Naive thymus-derived CD4-positive, alpha-beta T cell (primary cell): ENCODE measurements at regions of chr2 and their contacts with region 1.

Region 1: DNA sequence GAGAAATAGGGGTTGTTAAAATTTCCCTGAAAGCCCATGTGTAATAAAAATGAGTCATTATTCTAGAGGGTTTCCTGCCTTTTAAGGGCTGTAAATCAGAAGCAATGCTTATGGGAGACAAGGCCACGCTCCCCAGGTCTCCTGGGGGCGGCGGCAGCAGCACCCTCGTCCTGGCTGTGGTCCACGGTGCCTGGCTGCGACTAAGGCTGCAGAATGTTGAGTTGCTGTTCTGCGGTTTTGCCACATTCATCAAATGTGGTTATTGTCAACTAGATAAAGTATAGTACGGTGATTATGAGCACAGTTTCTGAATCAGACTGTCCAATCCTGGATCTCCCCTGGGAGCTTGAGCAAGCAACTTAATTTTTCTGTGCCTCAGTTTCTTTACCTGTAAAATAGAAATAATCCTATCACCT is 11.9 kb upstream of the AGFG1 start:
- DNase-seq: peak in 8 of 9 donors; percentile 16 to 61 (median 34)
- ATAC-seq: peak; percentile 78
- H3K4me3 ChIP-seq: no peak overlapping the region
- H3K4me3 Mint-ChIP-seq: peak overlapping the region; percentile 6 to 74 (median 58)
- H3K27ac ChIP-seq: no peak overlapping the region
- H3K27ac Mint-ChIP-seq: peak overlapping the region in 6 of 9 donors; percentile 5 to 76 (median 37)
- H3K4me1 ChIP-seq: peaks cover 31 to 52% of the 10 kb centered on the region in 2 donors
- H3K4me1 Mint-ChIP-seq: peaks cover 36 to 68% (median 64%) of the 10 kb centered on the region in 7 donors
- H3K27me3 ChIP-seq: no peaks in the 10 kb centered on the region
- H3K27me3 Mint-ChIP-seq: no peaks in the 10 kb centered on the region

Region 2: GRCh38 chr2:227363756-227364155 is 96.3 kb before region 1 on chr2:
- CTCF ChIA-PET with region 1: no interaction called
- POLR2A ChIA-PET with region 1: no interaction called
- intact Hi-C with region 1: loop called in 1 of 2 experiments (anchors 5 kb)
- DNase-seq: peak in 6 of 9 donors; percentile 3 to 32 (median 15)
- ATAC-seq: no peak
- H3K4me3 ChIP-seq: no peak overlapping the region
- H3K4me3 Mint-ChIP-seq: no peak overlapping the region
- H3K27ac ChIP-seq: no peak overlapping the region
- H3K27ac Mint-ChIP-seq: no peak overlapping the region
- H3K4me1 ChIP-seq: no peaks in the 10 kb centered on the region
- H3K4me1 Mint-ChIP-seq: peaks cover 0 to 8% (median 0%) of the 10 kb centered on the region in 7 donors
- H3K27me3 ChIP-seq: no peaks in the 10 kb centered on the region
- H3K27me3 Mint-ChIP-seq: no peaks in the 10 kb centered on the region

Region 3: DNA sequence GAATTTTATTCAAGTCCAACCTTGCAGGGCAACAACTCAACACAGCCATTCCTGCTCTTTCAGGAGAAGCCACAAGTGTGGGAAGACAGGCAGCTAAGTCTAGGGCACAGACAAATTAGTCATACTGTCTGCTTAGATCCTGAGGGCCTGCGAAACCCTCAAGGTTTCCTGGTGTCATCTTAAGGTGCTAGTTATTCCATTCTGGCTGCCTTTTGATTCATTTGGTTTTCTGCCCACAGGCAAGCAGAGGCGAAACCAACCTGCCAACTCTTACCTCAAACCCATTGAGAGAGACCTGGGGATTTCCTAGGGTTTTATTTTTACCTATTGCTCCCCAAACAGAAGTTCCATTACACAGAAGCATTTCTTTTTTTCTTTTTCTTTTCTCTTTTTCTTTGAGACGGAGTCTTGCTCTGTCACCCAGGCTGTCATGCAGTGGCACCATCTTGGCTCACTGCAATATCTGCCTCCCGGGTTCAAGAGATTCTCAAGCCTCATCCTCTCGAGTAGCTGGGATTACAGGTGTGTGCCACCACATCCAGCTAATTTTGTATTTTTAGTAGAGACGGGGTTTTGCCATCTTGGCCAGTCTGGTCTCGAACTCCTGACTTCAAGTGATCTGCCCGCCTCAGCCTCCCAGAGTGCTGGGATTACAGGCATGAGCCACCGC is 48.6 kb before region 1 on chr2:
- CTCF ChIA-PET with region 1: interaction called, 3 read pairs
- POLR2A ChIA-PET with region 1: no interaction called
- intact Hi-C with region 1: loop called in 1 of 2 experiments (anchors 2 kb)
- DNase-seq: peak in 2 of 9 donors; percentile 0 to 64
- ATAC-seq: peak; percentile 29
- H3K4me3 ChIP-seq: no peak overlapping the region
- H3K4me3 Mint-ChIP-seq: peak overlapping the region in 1 of 10 donors; percentile 55
- H3K27ac ChIP-seq: no peak overlapping the region
- H3K27ac Mint-ChIP-seq: peak overlapping the region; percentile 8 to 87 (median 55)
- H3K4me1 ChIP-seq: no peaks in the 10 kb centered on the region
- H3K4me1 Mint-ChIP-seq: peaks cover 0 to 32% (median 18%) of the 10 kb centered on the region in 7 donors
- H3K27me3 ChIP-seq: no peaks in the 10 kb centered on the region
- H3K27me3 Mint-ChIP-seq: no peaks in the 10 kb centered on the region

Region 4: GRCh38 chr2:227436436-227437174 is 23.5 kb before region 1 on chr2:
- CTCF ChIA-PET with region 1: no interaction called
- POLR2A ChIA-PET with region 1: no interaction called
- intact Hi-C with region 1: no loop called
- DNase-seq: no peak
- ATAC-seq: peak; percentile 47
- H3K4me3 ChIP-seq: no peak overlapping the region
- H3K4me3 Mint-ChIP-seq: no peak overlapping the region
- H3K27ac ChIP-seq: no peak overlapping the region
- H3K27ac Mint-ChIP-seq: no peak overlapping the region
- H3K4me1 ChIP-seq: no peaks in the 10 kb centered on the region
- H3K4me1 Mint-ChIP-seq: no peaks in the 10 kb centered on the region
- H3K27me3 ChIP-seq: no peaks in the 10 kb centered on the region
- H3K27me3 Mint-ChIP-seq: peaks cover 0 to 9% (median 0%) of the 10 kb centered on the region in 5 donors